ENCODE measurements at regions of chr5 and their contacts with region 1.

Region 1: DNA sequence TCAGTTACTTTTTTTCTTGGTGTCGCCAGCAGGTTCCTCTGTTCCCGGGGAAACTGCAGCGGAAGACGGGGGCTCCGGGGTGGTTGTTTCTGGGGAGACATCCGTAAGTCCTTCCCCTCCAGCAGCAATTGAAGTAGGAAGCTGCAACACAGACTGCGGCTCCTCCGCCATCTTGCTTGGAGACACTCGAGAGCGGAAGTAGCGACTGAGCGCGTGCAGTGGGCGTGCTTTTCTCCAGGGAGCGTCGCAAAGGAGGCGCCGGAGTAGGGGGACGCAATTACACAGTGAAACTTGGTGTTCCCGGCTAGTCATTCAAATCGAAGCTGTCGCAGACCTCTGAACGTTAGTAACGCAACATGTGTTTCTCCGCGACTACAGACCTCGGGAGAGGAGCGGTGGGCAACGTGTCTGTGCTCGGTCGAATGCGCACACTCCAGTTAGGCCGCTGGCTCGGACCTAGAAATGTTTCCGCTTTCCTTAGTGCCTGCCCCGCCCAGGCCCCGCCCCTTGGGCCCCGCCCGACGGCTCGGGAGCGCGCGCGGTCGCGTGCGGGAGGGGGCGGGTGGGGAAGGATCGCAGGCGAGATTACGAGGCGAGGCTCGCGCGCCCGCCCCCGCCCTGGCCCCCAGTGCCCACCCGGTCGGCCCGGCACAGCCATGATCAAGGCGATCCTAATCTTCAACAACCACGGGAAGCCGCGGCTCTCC is at the starts of genes AP3S1 and ATG12:
- DNase-seq: peak; percentile 80 to 96 (median 90)
- ATAC-seq: peak; percentile 84
- H3K4me3 ChIP-seq: peak within 1 kb of the TSS; percentile 77 to 89
- H3K4me3 Mint-ChIP-seq: peak within 1 kb of the TSS; percentile 96
- H3K27ac ChIP-seq: peak within 1 kb of the TSS; percentile 88 to 97
- H3K27ac Mint-ChIP-seq: peak within 1 kb of the TSS; percentile 99
- H3K4me1 ChIP-seq: peaks cover 32% of the 10 kb centered on the region
- H3K4me1 Mint-ChIP-seq: peaks cover 67% of the 10 kb centered on the region
- H3K27me3 ChIP-seq: no peaks in the 10 kb centered on the region
- H3K27me3 Mint-ChIP-seq: no peaks in the 10 kb centered on the region
- CTCF ChIP-seq: no peak
- total RNA-seq, gene AP3S1: 36.5 to 43.5 TPM
- total RNA-seq, gene ATG12: 62.5 to 68.3 TPM

Region 2: DNA sequence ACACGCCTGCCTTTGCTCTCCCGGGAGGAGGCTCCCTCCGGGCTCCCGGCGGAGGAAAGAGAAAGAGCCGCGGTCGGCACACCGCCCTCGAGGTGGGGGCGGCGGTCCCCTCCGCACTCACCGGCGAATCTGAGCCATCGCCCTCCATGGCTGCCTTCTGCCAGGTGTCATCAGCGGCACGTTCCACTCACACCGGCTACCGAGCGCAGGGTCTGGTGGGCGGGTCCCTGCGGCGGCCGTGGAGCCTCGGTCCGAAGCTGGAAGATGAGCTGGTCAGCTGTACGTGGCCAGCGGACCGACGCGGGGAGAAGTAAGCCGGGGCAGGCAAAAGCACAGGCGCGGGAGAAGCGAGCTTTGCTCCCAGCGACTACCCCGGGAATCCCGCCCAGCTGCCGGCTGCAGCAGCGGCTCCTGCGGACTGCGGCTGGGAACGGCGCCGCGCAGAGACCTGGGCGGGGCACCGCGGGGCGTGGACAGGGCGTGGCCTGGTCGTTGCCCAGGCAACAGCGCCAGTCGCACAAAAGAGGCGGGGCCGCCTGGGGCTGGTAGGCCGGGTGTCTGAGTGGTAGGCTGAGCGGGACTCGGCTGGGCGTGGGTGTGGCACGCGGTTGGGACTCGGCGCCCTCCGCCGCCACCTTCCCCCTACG is 671.9 kb before region 1 on chr5 and contains the start of gene TRIM36:
- CTCF ChIA-PET with region 1: no interaction called
- POLR2A ChIA-PET with region 1: no interaction called
- intact Hi-C with region 1: loop called (anchors 2 to 5 kb)
- DNase-seq: peak; percentile 75 to 93 (median 88)
- ATAC-seq: peak; percentile 88
- H3K4me3 ChIP-seq: peak within 1 kb of the TSS; percentile 73 to 78
- H3K4me3 Mint-ChIP-seq: peak within 1 kb of the TSS; percentile 82
- H3K27ac ChIP-seq: no peak within 1 kb of the TSS
- H3K27ac Mint-ChIP-seq: no peak within 1 kb of the TSS
- H3K4me1 ChIP-seq: peaks cover 18% of the 10 kb centered on the region
- H3K4me1 Mint-ChIP-seq: peaks cover 13% of the 10 kb centered on the region
- H3K27me3 ChIP-seq: peaks cover 21 to 36% of the 10 kb centered on the region in 2 experiments
- H3K27me3 Mint-ChIP-seq: peaks cover 56% of the 10 kb centered on the region
- CTCF ChIP-seq: no peak
- total RNA-seq, gene TRIM36: not detected

Region 3: GRCh38 chr5:115296124-115297022 is 545.2 kb before region 1 on chr5 and contains the start of gene CCDC112:
- CTCF ChIA-PET with region 1: no interaction called
- POLR2A ChIA-PET with region 1: no interaction called
- intact Hi-C with region 1: loop called in 1 of 2 experiments (anchors 1 kb)
- DNase-seq: peak; percentile 45 to 85 (median 70)
- ATAC-seq: peak; percentile 76
- H3K4me3 ChIP-seq: peak within 1 kb of the TSS; percentile 58 to 65
- H3K4me3 Mint-ChIP-seq: peak within 1 kb of the TSS; percentile 78
- H3K27ac ChIP-seq: no peak within 1 kb of the TSS
- H3K27ac Mint-ChIP-seq: no peak within 1 kb of the TSS
- H3K4me1 ChIP-seq: peaks cover 4% of the 10 kb centered on the region
- H3K4me1 Mint-ChIP-seq: peaks cover 12% of the 10 kb centered on the region
- H3K27me3 ChIP-seq: no peaks in the 10 kb centered on the region
- H3K27me3 Mint-ChIP-seq: no peaks in the 10 kb centered on the region
- CTCF ChIP-seq: no peak
- total RNA-seq, gene CCDC112: 1.6 to 2.7 TPM

Region 4: DNA sequence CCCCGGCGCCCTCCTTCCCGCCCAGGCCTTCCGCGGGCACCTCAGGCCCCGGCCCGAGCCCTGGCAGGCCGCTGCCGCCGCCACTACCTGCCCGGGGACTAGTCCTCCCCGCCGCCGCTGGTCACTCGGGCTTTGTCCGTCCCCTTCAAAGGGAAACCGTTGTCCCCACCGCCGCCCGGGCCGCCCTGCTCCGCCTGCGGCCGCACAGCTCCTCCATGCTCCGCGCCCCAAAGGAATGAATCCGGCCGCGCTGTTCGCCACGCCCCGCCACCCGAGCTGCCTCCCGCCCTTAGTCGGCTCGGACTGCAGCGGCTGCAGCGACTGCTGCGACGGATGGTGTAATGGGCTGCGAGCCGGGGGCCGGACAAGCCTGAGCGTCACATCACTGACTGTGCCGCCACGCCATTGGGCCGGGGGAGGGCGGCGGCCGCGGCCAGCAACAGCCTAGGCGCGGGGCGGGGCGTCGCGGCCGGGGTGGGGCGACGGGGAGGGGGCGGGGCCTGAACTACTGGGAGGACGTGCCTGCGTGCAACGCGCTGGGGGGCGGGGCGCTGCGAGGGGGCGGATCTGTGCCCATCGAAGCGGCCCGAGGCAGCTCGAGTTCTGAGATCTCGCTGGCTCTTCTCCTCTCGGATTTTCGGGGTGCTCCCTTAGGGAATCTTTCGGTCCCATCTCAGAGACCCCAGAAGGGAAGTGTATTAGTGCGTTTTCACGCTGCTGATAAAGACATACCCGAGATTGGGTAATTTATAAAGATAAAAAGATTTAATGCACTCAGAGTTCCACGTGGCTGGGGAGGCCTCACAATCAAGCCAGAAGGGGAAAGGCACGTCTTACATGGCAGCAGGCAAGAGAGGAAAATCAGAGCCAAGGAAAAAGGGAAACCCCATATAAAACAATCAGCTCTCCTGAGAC is 296.8 kb before region 1 on chr5 and contains the start of gene FEM1C:
- CTCF ChIA-PET with region 1: no interaction called
- POLR2A ChIA-PET with region 1: interaction called, 12 read pairs
- intact Hi-C with region 1: loop called (anchors 1 to 2 kb)
- DNase-seq: peak; percentile 93 to 99 (median 97)
- ATAC-seq: peak; percentile 90
- H3K4me3 ChIP-seq: peak within 1 kb of the TSS; percentile 75
- H3K4me3 Mint-ChIP-seq: peak within 1 kb of the TSS; percentile 95
- H3K27ac ChIP-seq: peak within 1 kb of the TSS; percentile 85 to 87
- H3K27ac Mint-ChIP-seq: peak within 1 kb of the TSS; percentile 97
- H3K4me1 ChIP-seq: peaks cover 41% of the 10 kb centered on the region
- H3K4me1 Mint-ChIP-seq: peaks cover 47% of the 10 kb centered on the region
- H3K27me3 ChIP-seq: no peaks in the 10 kb centered on the region
- H3K27me3 Mint-ChIP-seq: no peaks in the 10 kb centered on the region
- CTCF ChIP-seq: no peak
- total RNA-seq, gene FEM1C: 32.7 to 32.9 TPM

Region 5: DNA sequence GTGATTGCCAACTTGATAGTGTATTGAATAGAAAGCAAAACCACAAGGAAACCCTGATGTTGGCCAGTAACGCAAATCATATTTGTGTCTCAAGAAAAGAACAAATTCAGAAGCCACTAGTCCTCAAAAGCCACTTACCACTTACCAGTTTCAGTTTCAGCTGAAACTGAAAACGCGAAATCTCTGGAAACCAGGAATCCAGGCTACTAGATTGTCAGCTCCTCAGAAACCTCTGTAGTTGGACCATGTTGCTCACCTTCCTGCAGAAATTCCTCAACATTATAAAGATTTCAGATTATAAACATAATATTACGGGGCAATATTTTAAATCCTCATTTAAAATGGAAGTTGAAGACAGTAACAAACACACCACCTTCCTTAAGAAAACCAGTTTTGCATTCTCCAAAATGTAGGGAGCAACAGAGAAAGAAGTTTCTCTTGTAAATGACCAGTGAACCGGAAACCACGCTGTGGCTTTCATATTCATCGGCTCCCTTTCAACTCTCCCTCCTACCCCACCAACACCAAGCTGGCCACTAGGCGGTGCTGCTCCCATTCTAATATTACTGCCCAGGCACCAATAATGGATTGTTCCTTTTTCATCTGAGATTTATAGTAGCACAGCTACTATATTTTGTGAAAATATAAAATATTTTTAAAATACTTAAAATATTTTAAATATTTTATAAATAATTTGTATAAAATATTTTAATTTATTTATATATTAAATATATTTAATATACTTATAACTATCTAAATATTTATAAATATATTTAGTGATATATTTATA is 207.0 kb before region 1 on chr5:
- CTCF ChIA-PET with region 1: interaction called, 7 read pairs
- POLR2A ChIA-PET with region 1: interaction called, 10 read pairs
- intact Hi-C with region 1: loop called (anchors 1 to 2 kb)
- DNase-seq: peak; percentile 57 to 88 (median 80)
- ATAC-seq: peak; percentile 93
- H3K4me3 ChIP-seq: peak overlapping the region; percentile 19 to 37
- H3K4me3 Mint-ChIP-seq: peak overlapping the region; percentile 82
- H3K27ac ChIP-seq: peak overlapping the region in 1 of 2 experiments; percentile 31
- H3K27ac Mint-ChIP-seq: peak overlapping the region; percentile 69
- H3K4me1 ChIP-seq: no peaks in the 10 kb centered on the region
- H3K4me1 Mint-ChIP-seq: peaks cover 10% of the 10 kb centered on the region
- H3K27me3 ChIP-seq: no peaks in the 10 kb centered on the region
- H3K27me3 Mint-ChIP-seq: no peaks in the 10 kb centered on the region
- CTCF ChIP-seq: peak; percentile 96

Region 6: DNA sequence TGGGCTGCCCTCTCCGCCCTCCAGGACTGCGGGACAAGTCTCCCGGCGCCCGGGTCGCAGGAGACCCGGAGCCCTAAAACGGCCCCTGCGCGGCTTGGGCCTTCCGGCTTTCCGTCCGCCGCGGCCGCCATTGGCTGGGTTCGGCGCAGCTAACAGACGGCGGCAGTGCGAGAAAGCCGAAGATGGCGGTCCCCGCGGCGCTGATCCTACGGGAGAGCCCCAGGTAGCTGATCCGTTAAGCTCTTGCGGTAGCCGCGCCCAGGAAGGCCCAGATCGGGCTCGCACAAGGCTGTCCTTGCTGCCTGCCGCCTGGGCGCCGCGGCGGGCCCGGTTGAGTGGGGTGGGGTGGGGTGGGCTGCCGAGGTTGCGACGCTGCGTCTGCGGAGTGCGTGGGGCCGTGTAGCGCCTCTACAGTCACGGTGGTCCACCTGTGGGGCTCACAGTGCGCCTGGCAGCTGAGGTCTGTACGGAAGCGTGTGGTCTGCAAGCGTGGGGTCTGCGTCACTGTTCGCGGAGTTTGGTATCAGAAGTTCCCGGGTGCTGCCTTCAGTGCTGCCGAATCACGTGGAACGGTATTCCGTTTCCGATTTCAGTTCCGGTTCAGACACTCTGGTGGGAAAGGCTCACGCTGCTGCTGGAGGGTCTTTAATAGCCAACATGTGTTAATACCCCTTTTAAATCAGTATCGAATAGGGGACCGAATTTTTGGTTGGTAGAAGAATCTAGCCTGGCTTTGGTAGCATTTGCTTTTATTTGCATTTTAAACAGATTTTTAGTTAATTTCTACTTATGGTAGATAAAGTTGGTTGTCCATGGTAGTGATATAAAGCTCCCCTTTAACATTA is 243.6 kb after region 1 on chr5 and contains the start of gene COMMD10:
- CTCF ChIA-PET with region 1: no interaction called
- POLR2A ChIA-PET with region 1: interaction called, 13 read pairs
- intact Hi-C with region 1: loop called (anchors 1 kb)
- DNase-seq: peak; percentile 67 to 97 (median 85)
- ATAC-seq: peak; percentile 93
- H3K4me3 ChIP-seq: peak within 1 kb of the TSS; percentile 45 to 71
- H3K4me3 Mint-ChIP-seq: peak within 1 kb of the TSS; percentile 91
- H3K27ac ChIP-seq: peak within 1 kb of the TSS; percentile 87 to 96
- H3K27ac Mint-ChIP-seq: peak within 1 kb of the TSS; percentile 96
- H3K4me1 ChIP-seq: peaks cover 18% of the 10 kb centered on the region
- H3K4me1 Mint-ChIP-seq: peaks cover 62% of the 10 kb centered on the region
- H3K27me3 ChIP-seq: no peaks in the 10 kb centered on the region
- H3K27me3 Mint-ChIP-seq: no peaks in the 10 kb centered on the region
- CTCF ChIP-seq: no peak
- total RNA-seq, gene COMMD10: 18.0 to 18.8 TPM